ENCODE measurements at regions of chr20 and their contacts with region 1.

Region 1: GRCh38 chr20:34704177-34705007 is at the start of gene TP53INP2:
- DNase-seq: peak; percentile 82 to 89
- ATAC-seq: peak; percentile 50 to 66
- H3K4me3 ChIP-seq: peak within 1 kb of the TSS; percentile 94
- H3K27ac ChIP-seq: peak within 1 kb of the TSS; percentile 80 to 93
- H3K4me1 ChIP-seq: peaks cover 26% of the 10 kb centered on the region
- CTCF ChIP-seq: no peak
- EP300 ChIP-seq: no peak
- POLR2A ChIP-seq: no peak
- RAD21 ChIP-seq: no peak
- polyA plus RNA-seq, gene TP53INP2: 2.2 and 3.6 TPM in 2 replicates

Region 2: GRCh38 chr20:34573541-34574300 is 130.7 kb before region 1 on chr20:
- CTCF ChIA-PET with region 1: interaction called, 108 read pairs
- POLR2A ChIA-PET with region 1: interaction called, 3 read pairs
- DNase-seq: no peak
- ATAC-seq: no peak
- H3K4me3 ChIP-seq: no peak overlapping the region
- H3K27ac ChIP-seq: no peak overlapping the region
- H3K4me1 ChIP-seq: no peaks in the 10 kb centered on the region
- CTCF ChIP-seq: no peak
- EP300 ChIP-seq: no peak
- POLR2A ChIP-seq: no peak
- RAD21 ChIP-seq: no peak

Region 3: DNA sequence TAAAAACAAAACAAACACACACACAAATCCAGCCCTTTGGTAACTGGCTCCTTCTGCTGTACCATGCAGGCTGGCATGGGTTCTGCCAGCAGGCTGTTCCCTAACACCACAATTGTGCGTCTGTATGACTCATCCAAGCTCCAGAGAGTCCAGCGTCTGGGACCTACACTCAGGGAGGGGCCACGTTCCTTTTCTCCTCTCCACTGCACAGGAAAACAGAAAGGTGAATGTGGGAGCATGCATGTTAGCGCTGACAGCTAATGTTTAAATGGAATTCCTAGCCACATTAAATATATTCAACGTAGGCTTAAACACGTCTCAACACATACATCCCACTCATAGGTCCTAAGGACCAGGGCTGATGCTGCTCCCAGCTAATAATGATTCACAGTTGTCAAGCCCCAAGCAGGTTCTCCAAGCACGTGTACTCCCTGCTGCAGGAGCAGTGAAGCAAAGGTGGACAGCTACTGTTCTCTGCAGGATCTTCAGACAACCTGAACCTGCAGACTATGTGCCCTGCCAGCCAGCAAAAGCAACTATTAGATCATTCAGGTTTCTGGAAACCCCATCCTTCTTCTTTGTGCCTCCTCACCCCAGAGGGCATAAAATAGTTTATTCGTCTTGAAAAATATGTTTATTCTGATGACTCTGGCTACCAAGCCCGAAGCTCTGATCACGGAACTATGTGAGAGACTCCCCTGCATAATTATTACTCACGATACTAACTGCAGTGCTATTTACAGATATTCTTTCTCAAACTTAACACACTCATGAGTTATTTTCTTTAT is 125.0 kb before region 1 on chr20:
- CTCF ChIA-PET with region 1: interaction called, 108 read pairs
- POLR2A ChIA-PET with region 1: interaction called, 3 read pairs
- DNase-seq: peak in 1 of 2 experiments; percentile 69
- ATAC-seq: peak; percentile 91 to 96
- H3K4me3 ChIP-seq: no peak overlapping the region
- H3K27ac ChIP-seq: no peak overlapping the region
- H3K4me1 ChIP-seq: peaks cover 15% of the 10 kb centered on the region; the same call in 2 of the 3 replicates
- CTCF ChIP-seq: peak; percentile 82
- EP300 ChIP-seq: no peak
- POLR2A ChIP-seq: no peak
- RAD21 ChIP-seq: peak; percentile 93 to 94

Region 4: GRCh38 chr20:34676642-34677373 is 27.6 kb before region 1 on chr20 and contains the start of gene PIGU:
- CTCF ChIA-PET with region 1: interaction called, 10 read pairs
- POLR2A ChIA-PET with region 1: interaction called, 12 read pairs
- DNase-seq: peak; percentile 91 to 96
- ATAC-seq: peak; percentile 98
- H3K4me3 ChIP-seq: peak within 1 kb of the TSS; percentile 74
- H3K27ac ChIP-seq: peak within 1 kb of the TSS; percentile 83 to 88
- H3K4me1 ChIP-seq: peaks cover 12% of the 10 kb centered on the region
- CTCF ChIP-seq: no peak
- EP300 ChIP-seq: no peak
- POLR2A ChIP-seq: peak; percentile 67
- RAD21 ChIP-seq: no peak
- polyA plus RNA-seq, gene PIGU: 100 and 103 TPM in 2 replicates

Region 5: GRCh38 chr20:34689486-34689885 is 14.9 kb before region 1 on chr20:
- CTCF ChIA-PET with region 1: interaction called, 17 read pairs
- POLR2A ChIA-PET with region 1: no interaction called
- DNase-seq: peak in 1 of 2 experiments; percentile 69
- ATAC-seq: peak; percentile 52 to 77; a peak in 4 of 6 replicates
- H3K4me3 ChIP-seq: no peak overlapping the region
- H3K27ac ChIP-seq: no peak overlapping the region
- H3K4me1 ChIP-seq: peaks cover 15% of the 10 kb centered on the region; the same call in 2 of the 3 replicates
- CTCF ChIP-seq: no peak
- EP300 ChIP-seq: no peak
- POLR2A ChIP-seq: no peak
- RAD21 ChIP-seq: no peak

Region 6: GRCh38 chr20:34720266-34720665 is 15.9 kb after region 1 on chr20:
- CTCF ChIA-PET with region 1: interaction called, 12 read pairs
- POLR2A ChIA-PET with region 1: no interaction called
- DNase-seq: no peak
- ATAC-seq: no peak
- H3K4me3 ChIP-seq: no peak overlapping the region
- H3K27ac ChIP-seq: no peak overlapping the region
- H3K4me1 ChIP-seq: no peaks in the 10 kb centered on the region
- CTCF ChIP-seq: no peak
- EP300 ChIP-seq: no peak
- POLR2A ChIP-seq: no peak
- RAD21 ChIP-seq: no peak

Region 7: DNA sequence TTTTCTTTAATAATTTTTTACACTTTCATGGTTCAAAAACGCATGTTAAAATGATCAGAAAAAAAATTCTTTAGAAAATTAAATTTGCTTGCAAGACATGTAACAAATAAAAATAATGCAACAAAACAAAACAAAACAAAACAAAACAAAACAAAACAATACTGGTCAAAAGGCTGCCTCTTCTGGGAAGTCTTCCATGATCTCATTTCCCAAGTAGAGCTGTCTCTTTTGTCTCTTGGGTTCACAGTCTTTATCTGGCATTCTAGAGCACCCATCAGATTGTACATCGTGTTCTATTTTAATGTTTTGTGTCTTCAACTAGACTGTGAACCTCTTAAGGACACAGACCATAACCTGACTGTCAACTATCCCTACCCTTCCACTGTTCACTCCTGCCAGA is 25.0 kb after region 1 on chr20:
- CTCF ChIA-PET with region 1: interaction called, 12 read pairs
- POLR2A ChIA-PET with region 1: no interaction called
- DNase-seq: no peak
- ATAC-seq: no peak
- H3K4me3 ChIP-seq: no peak overlapping the region
- H3K27ac ChIP-seq: no peak overlapping the region
- H3K4me1 ChIP-seq: no peaks in the 10 kb centered on the region
- CTCF ChIP-seq: no peak
- EP300 ChIP-seq: no peak
- POLR2A ChIP-seq: no peak
- RAD21 ChIP-seq: no peak